WTC11 (cell line): ENCODE measurements at regions of chr20 and their contacts with region 1.

Region 1: GRCh38 chr20:38073307-38074071 is 39.9 kb downstream of the RPRD1B start:
- DNase-seq: no peak
- ATAC-seq: peak; percentile 83
- H3K4me3 Mint-ChIP-seq: no peak overlapping the region
- H3K27ac Mint-ChIP-seq: no peak overlapping the region
- H3K4me1 Mint-ChIP-seq: peaks cover 6% of the 10 kb centered on the region
- H3K27me3 Mint-ChIP-seq: no peaks in the 10 kb centered on the region
- CTCF ChIP-seq: no peak; the same call in 1 of the 2 replicates

Region 2: GRCh38 chr20:37640600-37641561 is 432.6 kb before region 1 on chr20:
- CTCF ChIA-PET with region 1: no interaction called
- POLR2A ChIA-PET with region 1: no interaction called
- DNase-seq: no peak
- ATAC-seq: no peak
- H3K4me3 Mint-ChIP-seq: no peak overlapping the region
- H3K27ac Mint-ChIP-seq: no peak overlapping the region
- H3K4me1 Mint-ChIP-seq: no peaks in the 10 kb centered on the region
- H3K27me3 Mint-ChIP-seq: peaks cover 3% of the 10 kb centered on the region; the same call in 1 of the 2 replicates
- CTCF ChIP-seq: no peak

Region 3: DNA sequence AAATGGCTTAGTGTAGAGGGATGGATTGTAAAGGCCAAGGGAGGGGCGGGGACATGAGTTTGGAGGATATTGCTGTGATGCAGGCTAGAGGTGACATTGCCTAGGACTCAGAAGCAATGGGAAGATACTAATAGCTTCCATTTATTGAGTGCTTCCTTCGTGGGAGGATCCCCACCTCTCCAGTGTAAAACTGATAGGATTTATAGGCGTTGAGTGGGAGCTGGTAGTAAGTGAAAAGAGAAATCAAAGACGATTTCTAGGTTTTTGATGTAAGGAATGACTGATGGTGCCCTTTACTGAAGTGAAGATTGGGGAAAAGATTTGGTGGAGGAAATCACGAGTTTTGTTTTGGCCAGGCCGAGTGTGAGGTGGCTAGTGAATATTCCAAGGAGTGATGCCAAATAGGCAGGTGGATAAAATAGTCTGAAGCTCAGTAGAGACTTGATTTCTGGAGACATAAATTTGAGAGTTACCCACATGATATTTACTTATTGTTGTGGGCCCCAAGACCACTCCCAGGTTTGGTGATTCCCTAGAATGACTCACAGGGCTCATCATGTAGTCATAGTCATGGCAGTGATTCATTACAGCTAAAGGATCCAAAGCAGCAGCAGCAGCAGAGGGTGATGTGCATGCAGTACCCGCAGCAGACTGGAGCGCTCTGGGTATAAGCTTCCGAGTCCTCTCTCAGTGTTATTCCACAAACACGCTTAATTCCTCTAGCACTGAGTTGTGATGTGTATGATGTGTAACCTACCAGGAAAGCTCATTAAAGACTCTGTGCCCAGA is 29.8 kb before region 1 on chr20:
- CTCF ChIA-PET with region 1: interaction called, 13 read pairs
- POLR2A ChIA-PET with region 1: no interaction called
- DNase-seq: no peak
- ATAC-seq: no peak
- H3K4me3 Mint-ChIP-seq: no peak overlapping the region
- H3K27ac Mint-ChIP-seq: peak overlapping the region; percentile 17; the same call in 1 of the 2 replicates
- H3K4me1 Mint-ChIP-seq: peaks cover 18% of the 10 kb centered on the region
- H3K27me3 Mint-ChIP-seq: no peaks in the 10 kb centered on the region
- CTCF ChIP-seq: no peak

Region 4: DNA sequence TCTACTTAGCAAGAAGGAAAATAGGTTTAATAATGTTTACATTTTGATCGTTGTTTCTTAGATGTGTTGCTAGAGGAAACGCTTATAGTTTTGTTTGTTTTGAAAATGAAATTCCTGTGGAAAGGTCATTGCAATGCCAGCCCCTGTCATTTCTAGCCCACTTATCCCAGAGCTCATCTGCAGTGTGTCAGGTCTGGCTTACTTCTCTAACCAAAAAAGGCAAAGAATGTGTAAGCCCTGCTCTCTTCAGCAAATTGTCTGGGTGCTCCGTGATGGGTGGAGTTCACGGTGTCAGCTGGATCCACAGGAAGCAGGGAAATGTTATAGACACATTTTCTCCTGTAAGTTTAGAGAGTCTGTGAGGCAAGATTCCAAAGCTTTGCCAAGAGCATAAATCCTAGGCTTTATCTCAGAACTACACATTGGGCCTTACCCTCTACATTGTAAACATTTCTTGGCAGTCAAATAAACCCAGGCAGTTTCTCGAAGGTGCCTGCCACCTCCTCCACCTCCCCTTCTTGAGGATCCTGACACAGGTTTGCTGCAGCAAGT is 11.0 kb after region 1 on chr20:
- CTCF ChIA-PET with region 1: interaction called, 26 read pairs
- POLR2A ChIA-PET with region 1: no interaction called
- DNase-seq: no peak
- ATAC-seq: no peak
- H3K4me3 Mint-ChIP-seq: no peak overlapping the region
- H3K27ac Mint-ChIP-seq: no peak overlapping the region
- H3K4me1 Mint-ChIP-seq: no peaks in the 10 kb centered on the region
- H3K27me3 Mint-ChIP-seq: no peaks in the 10 kb centered on the region
- CTCF ChIP-seq: no peak

Region 5: GRCh38 chr20:38113401-38114325 is 40.2 kb after region 1 on chr20:
- CTCF ChIA-PET with region 1: interaction called, 27 read pairs
- POLR2A ChIA-PET with region 1: no interaction called
- DNase-seq: peak; percentile 81
- ATAC-seq: peak; percentile 98
- H3K4me3 Mint-ChIP-seq: no peak overlapping the region
- H3K27ac Mint-ChIP-seq: no peak overlapping the region
- H3K4me1 Mint-ChIP-seq: peaks cover 3% of the 10 kb centered on the region; the same call in 1 of the 2 replicates
- H3K27me3 Mint-ChIP-seq: no peaks in the 10 kb centered on the region
- CTCF ChIP-seq: no peak; the same call in 1 of the 2 replicates

Region 6: DNA sequence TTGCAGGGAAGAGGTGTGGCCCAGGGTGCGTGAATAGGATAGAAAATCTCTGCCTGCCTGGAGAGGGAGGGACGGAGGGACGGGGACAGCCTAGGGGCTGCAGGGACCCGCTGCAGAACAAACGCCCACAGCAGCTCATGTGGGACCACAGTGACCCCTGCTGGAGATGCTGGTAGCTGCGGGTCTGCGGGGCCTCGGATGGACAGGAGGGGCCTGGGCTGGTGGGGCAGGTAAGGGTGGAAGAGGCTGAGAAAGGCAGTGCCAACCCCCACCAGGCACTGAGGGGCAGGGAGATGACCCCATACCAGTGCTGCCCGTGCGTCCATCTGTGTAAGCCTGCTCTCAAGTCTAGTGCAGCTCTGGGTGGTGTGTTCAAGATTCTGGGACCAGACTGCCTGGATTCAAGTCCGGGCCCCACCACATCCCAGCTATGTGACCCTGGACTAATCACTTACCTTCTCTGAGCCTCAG is 147.7 kb after region 1 on chr20:
- CTCF ChIA-PET with region 1: interaction called, 134 read pairs
- POLR2A ChIA-PET with region 1: no interaction called
- DNase-seq: peak; percentile 95
- ATAC-seq: peak; percentile 95
- H3K4me3 Mint-ChIP-seq: no peak overlapping the region
- H3K27ac Mint-ChIP-seq: no peak overlapping the region
- H3K4me1 Mint-ChIP-seq: peaks cover 2% of the 10 kb centered on the region; the same call in 1 of the 2 replicates
- H3K27me3 Mint-ChIP-seq: no peaks in the 10 kb centered on the region; the same call in 1 of the 2 replicates
- CTCF ChIP-seq: peak; percentile 79

Region 7: DNA sequence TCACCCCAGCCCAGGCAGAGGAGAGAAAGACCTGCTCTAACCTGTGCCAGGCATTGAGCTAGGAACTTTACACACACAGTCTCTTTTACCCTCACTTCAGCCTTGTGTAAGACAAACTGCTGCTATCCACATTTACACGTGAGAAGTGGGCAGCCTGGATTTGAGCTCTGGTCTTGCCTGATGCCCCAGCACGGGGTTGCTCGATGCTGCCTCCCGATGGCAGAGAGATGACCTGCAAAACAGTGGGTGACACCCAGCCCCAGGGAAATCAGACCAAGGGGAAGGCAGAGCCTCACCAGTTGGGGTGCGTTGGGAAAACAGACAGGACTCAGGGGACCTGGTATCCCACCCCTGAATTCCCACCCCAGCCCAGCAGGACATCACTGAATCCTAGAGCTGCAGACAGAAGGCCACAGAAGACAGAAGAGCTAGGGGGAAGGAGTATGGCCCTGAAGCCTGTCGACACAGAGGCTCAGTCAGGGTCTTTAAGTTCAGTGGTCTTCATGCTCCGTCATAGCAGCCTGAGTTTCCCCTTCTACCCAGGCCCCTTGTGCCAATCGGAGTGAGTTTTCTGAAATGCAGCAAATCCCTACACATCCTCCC is 231.5 kb after region 1 on chr20:
- CTCF ChIA-PET with region 1: interaction called, 10 read pairs
- POLR2A ChIA-PET with region 1: no interaction called
- DNase-seq: peak; percentile 85
- ATAC-seq: peak; percentile 85
- H3K4me3 Mint-ChIP-seq: no peak overlapping the region
- H3K27ac Mint-ChIP-seq: no peak overlapping the region
- H3K4me1 Mint-ChIP-seq: peaks cover 6% of the 10 kb centered on the region
- H3K27me3 Mint-ChIP-seq: no peaks in the 10 kb centered on the region
- CTCF ChIP-seq: peak; percentile 47; the same call in 1 of the 2 replicates